ENCODE measurements at regions of chr9 and their contacts with region 1.

Region 1: DNA sequence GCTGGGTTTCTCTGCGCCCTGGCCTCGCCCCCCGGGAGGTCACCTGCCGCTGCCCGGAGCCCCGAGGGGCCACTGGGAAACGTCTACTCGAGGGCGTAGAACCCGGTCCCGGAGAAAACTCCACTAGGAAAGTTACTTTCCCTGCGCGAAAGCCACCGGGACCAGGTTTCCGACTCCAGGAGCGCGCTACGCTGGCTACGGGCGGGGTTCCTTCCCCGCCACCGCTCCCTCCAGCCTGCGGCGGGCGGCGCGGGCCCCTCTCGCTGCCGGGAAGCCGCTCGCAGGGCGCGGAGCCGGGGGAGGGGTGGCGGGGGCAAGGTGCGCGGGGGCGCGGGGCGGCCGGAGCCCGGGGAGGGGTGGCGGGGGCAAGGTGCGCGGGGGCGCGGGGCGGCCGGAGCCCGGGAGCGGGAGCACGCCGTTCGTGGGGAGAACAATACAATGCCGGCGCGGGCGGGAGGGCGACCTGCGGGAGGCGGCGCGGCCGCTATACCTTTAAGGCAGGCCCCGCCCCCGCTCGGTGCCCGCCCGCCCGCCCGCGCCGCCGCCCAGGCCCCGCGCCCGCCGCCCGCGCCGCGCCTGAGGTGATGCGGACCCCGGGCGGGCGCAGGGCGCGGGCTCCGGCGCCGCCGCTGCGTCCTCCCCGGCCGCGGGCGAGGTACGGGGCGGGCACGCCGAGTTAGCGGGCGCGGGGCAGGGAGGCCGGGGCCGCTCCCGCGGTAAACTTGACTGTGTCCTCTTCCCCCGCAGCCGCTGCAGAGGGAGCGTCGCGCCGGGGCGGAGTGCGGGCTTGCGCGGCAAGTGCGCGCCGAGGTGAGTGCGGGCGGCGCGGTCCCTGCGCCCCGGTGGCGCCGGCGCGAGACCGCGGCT is 278.1 kb downstream of the AOPEP start:
- DNase-seq: peak; percentile 83
- H3K4me3 Mint-ChIP-seq: peak overlapping the region; percentile 78
- H3K27ac Mint-ChIP-seq: peak overlapping the region; percentile 44
- H3K4me1 Mint-ChIP-seq: peaks cover 31% of the 10 kb centered on the region
- H3K27me3 Mint-ChIP-seq: peaks cover 28% of the 10 kb centered on the region

Region 2: GRCh38 chr9:94783102-94783664 is 221.5 kb before region 1 on chr9:
- intact Hi-C with region 1: loop called (anchors 5 kb)
- DNase-seq: peak; percentile 80
- H3K4me3 Mint-ChIP-seq: no peak overlapping the region
- H3K27ac Mint-ChIP-seq: no peak overlapping the region
- H3K4me1 Mint-ChIP-seq: peaks cover 11% of the 10 kb centered on the region
- H3K27me3 Mint-ChIP-seq: no peaks in the 10 kb centered on the region

Region 3: DNA sequence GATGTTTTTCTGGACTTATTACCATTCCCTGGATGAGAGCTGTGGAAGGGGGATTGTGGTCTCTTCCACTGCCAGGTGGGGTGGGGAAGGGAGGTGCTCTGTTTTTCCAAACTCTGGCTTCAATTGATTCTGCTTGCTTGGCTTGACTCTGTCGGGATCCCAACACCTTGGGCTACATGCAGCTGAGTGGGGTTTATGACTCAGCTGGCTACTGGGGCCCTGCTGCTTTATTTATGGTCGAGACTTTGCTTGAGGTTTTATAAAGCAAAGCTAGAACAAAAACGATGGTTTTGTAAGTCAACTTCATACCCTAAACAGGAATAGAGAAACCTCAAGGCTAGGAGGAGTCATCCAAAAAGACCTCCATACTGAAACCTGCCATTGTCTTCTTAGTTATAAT is 201.9 kb before region 1 on chr9:
- intact Hi-C with region 1: loop called (anchors 5 kb)
- DNase-seq: peak; percentile 63
- H3K4me3 Mint-ChIP-seq: no peak overlapping the region
- H3K27ac Mint-ChIP-seq: peak overlapping the region; percentile 45
- H3K4me1 Mint-ChIP-seq: peaks cover 28% of the 10 kb centered on the region
- H3K27me3 Mint-ChIP-seq: no peaks in the 10 kb centered on the region

Region 4: DNA sequence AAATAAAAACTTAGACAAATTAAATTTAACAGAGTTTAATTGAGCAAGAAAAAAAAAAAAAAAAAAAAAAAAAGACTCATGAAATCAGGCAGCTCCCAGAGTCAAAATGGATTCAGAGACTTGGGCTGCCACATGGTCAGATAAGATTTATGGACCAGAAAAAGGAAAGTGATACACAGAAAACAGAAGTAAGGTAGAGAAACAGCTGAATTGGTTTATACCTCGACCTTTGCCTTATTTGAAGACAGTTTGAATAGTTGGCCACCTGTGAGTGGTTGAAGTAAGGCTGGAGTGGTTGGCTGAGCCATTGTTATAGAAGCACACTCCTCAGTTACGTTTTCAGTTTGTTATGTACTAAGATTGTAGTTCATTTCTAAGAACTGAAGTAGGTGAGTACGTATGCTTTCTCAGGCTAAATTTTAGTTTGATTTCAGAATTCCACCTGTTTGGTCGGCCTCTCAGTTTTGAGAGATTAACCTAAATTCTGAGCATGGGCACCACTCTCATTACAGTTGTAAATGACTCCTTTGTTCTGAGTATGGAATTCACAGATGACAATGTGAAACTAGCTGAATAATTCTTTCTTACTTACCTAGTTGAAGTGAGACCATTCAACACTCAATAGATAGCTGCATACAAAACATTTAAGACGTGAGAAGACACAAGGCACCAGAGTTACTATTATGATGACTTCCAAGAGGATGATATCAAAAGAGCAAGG is 129.2 kb before region 1 on chr9:
- intact Hi-C with region 1: loop called (anchors 5 kb)
- DNase-seq: peak; percentile 51
- H3K4me3 Mint-ChIP-seq: no peak overlapping the region
- H3K27ac Mint-ChIP-seq: peak overlapping the region; percentile 4
- H3K4me1 Mint-ChIP-seq: peaks cover 44% of the 10 kb centered on the region
- H3K27me3 Mint-ChIP-seq: peaks cover 5% of the 10 kb centered on the region

Region 5: DNA sequence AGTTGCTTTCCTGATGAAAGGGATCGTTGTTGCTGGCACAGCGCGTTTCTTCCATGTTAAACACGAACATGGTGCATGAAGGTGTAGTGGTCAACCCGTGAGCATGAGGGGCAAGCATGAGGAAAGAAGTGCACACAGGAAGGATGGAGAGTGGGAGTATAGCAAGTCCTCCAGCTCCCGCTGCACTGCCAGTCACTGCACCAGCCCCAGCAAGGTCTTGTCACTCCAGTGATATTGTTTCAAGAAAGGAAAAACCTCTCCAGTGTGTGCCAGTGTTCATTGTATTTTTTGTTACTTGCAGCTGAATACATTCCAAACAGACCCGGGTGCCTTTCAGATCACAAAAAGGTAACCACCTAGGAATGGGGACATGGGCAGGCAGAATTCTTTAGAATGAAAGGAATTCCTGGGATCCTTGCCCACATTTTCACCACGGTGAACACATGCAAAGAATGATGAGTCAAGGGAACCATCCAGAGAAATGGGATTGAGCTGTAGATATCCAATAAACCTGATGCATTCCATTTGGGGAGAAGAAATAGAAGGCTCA is 91.9 kb before region 1 on chr9:
- intact Hi-C with region 1: no loop called
- DNase-seq: no peak
- H3K4me3 Mint-ChIP-seq: no peak overlapping the region
- H3K27ac Mint-ChIP-seq: no peak overlapping the region
- H3K4me1 Mint-ChIP-seq: peaks cover 4% of the 10 kb centered on the region
- H3K27me3 Mint-ChIP-seq: no peaks in the 10 kb centered on the region

Region 6: GRCh38 chr9:94952565-94953373 is 51.9 kb before region 1 on chr9:
- intact Hi-C with region 1: loop called (anchors 5 kb)
- DNase-seq: peak; percentile 77
- H3K4me3 Mint-ChIP-seq: peak overlapping the region; percentile 63
- H3K27ac Mint-ChIP-seq: peak overlapping the region; percentile 65
- H3K4me1 Mint-ChIP-seq: peaks cover 35% of the 10 kb centered on the region
- H3K27me3 Mint-ChIP-seq: no peaks in the 10 kb centered on the region

Region 7: GRCh38 chr9:95048225-95049087 is 43.8 kb after region 1 on chr9:
- intact Hi-C with region 1: loop called (anchors 5 kb)
- DNase-seq: peak; percentile 78
- H3K4me3 Mint-ChIP-seq: peak overlapping the region; percentile 86
- H3K27ac Mint-ChIP-seq: no peak overlapping the region
- H3K4me1 Mint-ChIP-seq: peaks cover 9% of the 10 kb centered on the region
- H3K27me3 Mint-ChIP-seq: peaks cover 36% of the 10 kb centered on the region

Region 8: DNA sequence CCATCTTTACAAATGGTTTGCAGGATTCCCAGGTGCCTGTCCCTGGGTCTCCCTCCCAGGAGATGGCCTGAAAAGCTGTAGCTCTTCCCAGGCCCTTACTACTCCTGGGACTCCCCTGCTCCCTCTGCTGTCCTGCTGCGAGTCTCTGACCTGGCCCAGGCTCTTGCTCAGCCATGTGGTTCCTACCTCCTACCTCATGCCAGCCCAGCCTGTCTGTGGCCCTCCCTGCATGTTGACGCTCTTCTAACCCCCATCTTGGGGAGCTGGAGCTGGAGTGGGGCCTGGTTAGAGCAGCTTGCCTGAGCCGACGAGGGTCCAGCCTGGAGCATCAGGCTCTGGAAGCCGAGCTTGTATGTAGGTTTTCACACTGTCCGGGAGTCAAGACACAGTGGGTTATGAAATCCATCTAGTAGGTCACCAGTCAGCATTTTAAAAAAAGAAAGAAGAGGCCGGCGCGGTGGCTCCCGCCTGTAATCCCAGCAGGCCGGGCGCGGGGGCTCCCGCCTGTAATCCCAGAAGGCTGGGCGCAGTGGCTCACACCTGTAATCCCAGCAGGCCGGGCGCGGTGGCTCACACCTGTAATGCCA is 68.5 kb after region 1 on chr9:
- intact Hi-C with region 1: no loop called
- DNase-seq: no peak
- H3K4me3 Mint-ChIP-seq: no peak overlapping the region
- H3K27ac Mint-ChIP-seq: no peak overlapping the region
- H3K4me1 Mint-ChIP-seq: no peaks in the 10 kb centered on the region
- H3K27me3 Mint-ChIP-seq: no peaks in the 10 kb centered on the region

Region 9: DNA sequence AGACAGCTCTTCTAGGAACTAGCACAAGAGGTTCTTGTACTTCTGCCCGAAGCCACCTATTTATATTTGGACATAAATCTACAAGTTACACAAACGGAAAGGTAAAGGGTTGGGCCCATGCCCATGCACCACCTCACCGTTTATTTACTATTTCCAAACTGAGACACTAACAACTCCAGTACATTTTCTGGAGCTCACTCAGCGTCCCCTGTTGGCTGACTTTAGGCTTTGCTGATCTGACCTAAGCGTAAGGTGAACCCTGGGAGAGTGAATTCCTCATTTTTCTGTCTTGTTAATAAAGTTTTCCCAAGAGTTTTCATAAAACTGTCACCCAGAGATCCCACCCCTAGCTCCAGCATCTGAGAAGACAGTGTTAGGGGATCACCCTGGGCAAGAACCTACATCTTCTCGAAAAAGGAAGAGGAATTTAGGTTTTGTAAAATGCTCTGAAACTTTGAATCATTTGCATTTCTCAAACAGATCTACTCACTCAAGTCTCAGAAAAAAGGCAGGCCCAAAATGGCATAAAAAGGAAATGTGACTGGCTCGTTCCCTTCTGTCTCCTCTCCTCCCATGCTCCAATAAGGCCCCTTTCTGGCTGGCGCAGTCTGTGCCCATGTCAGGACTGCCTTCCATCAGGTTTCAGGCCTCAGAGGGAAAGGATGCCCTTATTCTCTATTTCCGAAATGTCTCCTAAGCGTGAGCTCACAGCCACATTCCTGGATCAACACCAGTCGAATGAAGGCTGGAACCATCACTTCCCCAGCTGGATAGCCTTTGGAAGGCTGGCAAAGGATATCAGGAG is 111.6 kb after region 1 on chr9:
- intact Hi-C with region 1: no loop called
- DNase-seq: no peak
- H3K4me3 Mint-ChIP-seq: no peak overlapping the region
- H3K27ac Mint-ChIP-seq: no peak overlapping the region
- H3K4me1 Mint-ChIP-seq: no peaks in the 10 kb centered on the region
- H3K27me3 Mint-ChIP-seq: no peaks in the 10 kb centered on the region

Measured in activated CD4-positive, alpha-beta T cell treated with anti-CD3 and anti-CD28 coated beads, Interleukin-2, amount 10 ng/mL, durations not matched to agents 24 days and 14 days (primary cell).